Activated naive CD4-positive, alpha-beta T cell treated with anti-CD3 and anti-CD28 coated beads for 36 hours (primary cell): ENCODE measurements at regions of chr7 and their contacts with region 1.

Region 1: GRCh38 chr7:10939911-10940703 is 33.6 kb upstream of the PHF14 start:
- DNase-seq: peak; percentile 86
- H3K4me3 Mint-ChIP-seq: no peak overlapping the region
- H3K27ac Mint-ChIP-seq: no peak overlapping the region
- H3K4me1 Mint-ChIP-seq: peaks cover 32% of the 10 kb centered on the region
- H3K27me3 Mint-ChIP-seq: no peaks in the 10 kb centered on the region

Region 2: DNA sequence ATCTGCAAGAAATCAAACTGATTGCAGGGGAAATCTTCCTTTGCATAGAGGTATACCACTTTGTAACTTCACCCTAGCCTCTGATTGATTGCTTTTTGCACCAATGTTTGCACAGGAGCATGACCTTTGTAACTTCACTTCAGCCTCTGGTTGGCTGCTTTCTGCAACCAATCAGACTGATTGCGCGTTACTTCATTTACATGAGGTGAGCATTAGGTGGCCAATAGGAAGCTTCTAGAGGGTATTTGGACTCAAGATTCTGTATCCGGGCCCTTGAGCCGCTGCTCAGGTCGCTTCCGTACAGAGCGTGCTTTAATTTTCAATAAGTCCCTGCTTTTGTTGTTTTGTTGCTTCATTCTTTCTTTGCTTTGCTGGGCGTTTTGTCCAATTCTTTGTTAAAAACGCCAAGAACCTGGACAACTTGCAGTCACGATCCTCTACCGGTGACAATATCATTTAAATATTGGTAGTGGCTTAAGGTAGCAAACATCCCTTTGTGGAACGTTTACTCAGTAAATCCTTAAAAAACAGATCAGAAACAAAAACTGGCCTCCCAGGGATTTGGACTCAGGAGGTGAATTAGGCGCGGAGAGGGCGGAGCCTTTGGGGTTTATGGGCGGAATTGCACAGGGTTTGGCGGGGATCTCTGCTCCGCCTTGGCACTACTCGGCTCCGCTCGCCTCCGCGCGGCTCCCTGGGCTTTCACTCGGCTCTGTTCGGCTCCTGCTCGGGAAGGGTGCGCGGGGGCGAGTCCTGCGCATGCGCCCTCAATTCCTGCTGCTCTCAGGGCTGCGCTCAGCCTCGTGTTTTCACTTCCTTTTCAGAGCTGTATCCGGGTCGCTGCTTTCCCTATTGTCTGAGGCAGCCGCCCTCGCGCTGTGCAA is 33.2 kb after region 1 on chr7 and contains the start of gene PHF14:
- CTCF ChIA-PET with region 1: no interaction called
- intact Hi-C with region 1: loop called (anchors 1 kb)
- DNase-seq: peak; percentile 97
- H3K4me3 Mint-ChIP-seq: peak within 1 kb of the TSS; percentile 90
- H3K27ac Mint-ChIP-seq: peak within 1 kb of the TSS; percentile 89
- H3K4me1 Mint-ChIP-seq: peaks cover 31% of the 10 kb centered on the region
- H3K27me3 Mint-ChIP-seq: peaks cover 8% of the 10 kb centered on the region
- total RNA-seq, gene PHF14: 26.0 to 28.1 TPM